Calu3 (cell line): ENCODE measurements at regions of chr1 and their contacts with region 1.

Region 1: GRCh38 chr1:52674497-52675384 is 23.4 kb downstream of the COA7 start:
- DNase-seq: peak; percentile 73
- H3K4me3 Mint-ChIP-seq: no peak overlapping the region
- H3K27ac Mint-ChIP-seq: peak overlapping the region; percentile 79
- H3K4me1 Mint-ChIP-seq: peaks cover 23% of the 10 kb centered on the region
- H3K27me3 Mint-ChIP-seq: no peaks in the 10 kb centered on the region
- CTCF ChIP-seq: no peak

Region 2: DNA sequence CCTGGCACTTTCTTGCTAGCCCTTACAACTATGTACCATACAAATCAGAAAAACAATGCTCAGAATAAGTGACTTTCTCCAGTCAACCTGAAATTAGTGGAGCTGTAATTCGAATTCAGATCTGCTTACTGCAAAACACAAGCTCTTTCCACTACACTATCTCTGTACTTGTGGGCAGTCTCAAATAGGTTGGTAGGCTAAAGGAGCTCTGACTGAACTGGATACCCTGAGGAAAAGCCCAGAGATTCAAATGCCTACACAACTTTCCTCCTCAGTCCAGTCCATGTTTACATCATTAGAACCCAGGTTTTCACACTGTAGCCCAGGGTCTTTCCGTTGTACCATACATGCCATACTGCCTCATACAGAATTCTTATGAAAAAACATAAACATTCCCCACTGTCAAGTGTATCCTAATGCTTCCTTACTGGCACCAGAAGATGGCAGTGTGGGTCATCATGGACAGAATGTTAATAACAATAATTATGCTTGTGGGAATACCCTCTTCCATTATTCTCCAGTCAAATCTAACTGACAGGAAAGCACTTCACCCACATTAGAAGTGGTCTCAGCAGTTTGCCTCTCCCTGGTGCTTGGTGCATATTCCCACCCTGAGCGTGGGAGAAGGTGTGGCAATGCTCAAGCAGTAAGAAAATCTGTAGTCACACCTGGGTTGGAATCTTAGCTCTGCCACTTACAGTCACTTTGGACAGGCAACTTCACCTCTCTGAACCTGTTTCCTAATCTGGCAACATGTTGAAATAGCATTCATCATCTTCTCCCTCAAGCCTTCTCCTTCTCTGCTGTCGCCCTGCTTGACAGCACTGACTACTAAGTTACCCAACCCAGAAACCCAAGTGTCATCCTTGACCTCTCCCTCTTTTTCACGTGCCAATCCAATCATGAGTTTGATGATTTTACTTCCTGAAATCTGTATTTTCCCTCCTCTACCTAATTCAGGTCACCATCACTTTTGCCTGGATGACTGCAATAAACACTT is 547.3 kb before region 1 on chr1:
- CTCF ChIA-PET with region 1: no interaction called
- intact Hi-C with region 1: loop called (anchors 10 kb)
- DNase-seq: peak; percentile 47
- H3K4me3 Mint-ChIP-seq: no peak overlapping the region
- H3K27ac Mint-ChIP-seq: no peak overlapping the region
- H3K4me1 Mint-ChIP-seq: no peaks in the 10 kb centered on the region
- H3K27me3 Mint-ChIP-seq: peaks cover 58% of the 10 kb centered on the region
- CTCF ChIP-seq: peak; percentile 51

Region 3: GRCh38 chr1:52814443-52814842 is 139.7 kb after region 1 on chr1:
- CTCF ChIA-PET with region 1: no interaction called
- intact Hi-C with region 1: no loop called
- DNase-seq: peak; percentile 55
- H3K4me3 Mint-ChIP-seq: no peak overlapping the region
- H3K27ac Mint-ChIP-seq: peak overlapping the region; percentile 8
- H3K4me1 Mint-ChIP-seq: peaks cover 9% of the 10 kb centered on the region
- H3K27me3 Mint-ChIP-seq: no peaks in the 10 kb centered on the region
- CTCF ChIP-seq: no peak